K562 (cell line): ENCODE measurements at regions of chr6 and their contacts with region 1.

Region 1: GRCh38 chr6:20401205-20402091 is at the start of gene E2F3:
- DNase-seq: peak; percentile 98 to 100 (median 98)
- ATAC-seq: peak; percentile 84
- H3K4me3 ChIP-seq: peak within 1 kb of the TSS; percentile 60
- H3K27ac ChIP-seq: peak within 1 kb of the TSS; percentile 95
- H3K4me1 ChIP-seq: peaks cover 12 to 19% of the 10 kb centered on the region in 2 experiments
- H3K27me3 ChIP-seq: no peaks in the 10 kb centered on the region
- CTCF ChIP-seq: no peak
- EP300 ChIP-seq: no peak
- POLR2A ChIP-seq: peak; percentile 99
- RAD21 ChIP-seq: peak; percentile 19 to 20; a peak in 2 of 4 replicates
- polyA plus RNA-seq, gene E2F3: 11.8 to 14.8 TPM

Region 2: GRCh38 chr6:20212392-20213217 is 188.8 kb before region 1 on chr6 and contains the start of gene MBOAT1:
- CTCF ChIA-PET with region 1: no interaction called
- POLR2A ChIA-PET with region 1: interaction called, 4 read pairs
- in situ Hi-C with region 1: no loop called
- intact Hi-C with region 1: loop called (anchors 2 kb)
- DNase-seq: peak; percentile 89 to 93 (median 91)
- ATAC-seq: peak; percentile 94
- H3K4me3 ChIP-seq: peak within 1 kb of the TSS; percentile 59
- H3K27ac ChIP-seq: peak within 1 kb of the TSS; percentile 86
- H3K4me1 ChIP-seq: peaks cover 35 to 43% of the 10 kb centered on the region in 2 experiments
- H3K27me3 ChIP-seq: no peaks in the 10 kb centered on the region
- CTCF ChIP-seq: peak in 2 of 3 experiments; percentile 26 to 42; a peak in 4 of 6 replicates
- EP300 ChIP-seq: no peak
- POLR2A ChIP-seq: peak; percentile 71
- RAD21 ChIP-seq: peak; percentile 38 to 49; a peak in 3 of 4 replicates
- polyA plus RNA-seq, gene MBOAT1: 0.13 to 0.39 TPM

Region 3: GRCh38 chr6:20427856-20428255 is 26.4 kb after region 1 on chr6:
- CTCF ChIA-PET with region 1: no interaction called
- POLR2A ChIA-PET with region 1: interaction called, 11 read pairs
- in situ Hi-C with region 1: no loop called
- intact Hi-C with region 1: no loop called
- DNase-seq: no peak
- ATAC-seq: no peak
- H3K4me3 ChIP-seq: no peak overlapping the region
- H3K27ac ChIP-seq: peak overlapping the region; percentile 19; the same call in 1 of the 3 replicates
- H3K4me1 ChIP-seq: peaks cover 36 to 53% of the 10 kb centered on the region in 2 experiments
- H3K27me3 ChIP-seq: no peaks in the 10 kb centered on the region
- CTCF ChIP-seq: no peak
- EP300 ChIP-seq: no peak
- POLR2A ChIP-seq: no peak
- RAD21 ChIP-seq: no peak

Region 4: GRCh38 chr6:20455251-20455940 is 53.9 kb after region 1 on chr6:
- CTCF ChIA-PET with region 1: interaction called, 8 read pairs
- POLR2A ChIA-PET with region 1: interaction called, 19 read pairs
- in situ Hi-C with region 1: no loop called
- intact Hi-C with region 1: loop called (anchors 2 kb)
- DNase-seq: no peak
- ATAC-seq: no peak; the same call in 2 of the 3 replicates
- H3K4me3 ChIP-seq: no peak overlapping the region
- H3K27ac ChIP-seq: peak overlapping the region; percentile 67
- H3K4me1 ChIP-seq: peaks cover 34 to 68% of the 10 kb centered on the region in 2 experiments
- H3K27me3 ChIP-seq: no peaks in the 10 kb centered on the region
- CTCF ChIP-seq: no peak
- EP300 ChIP-seq: no peak; the same call in 1 of the 2 replicates
- POLR2A ChIP-seq: no peak
- RAD21 ChIP-seq: no peak

Region 5: GRCh38 chr6:20542927-20543602 is 141.6 kb after region 1 on chr6:
- CTCF ChIA-PET with region 1: no interaction called
- POLR2A ChIA-PET with region 1: no interaction called
- in situ Hi-C with region 1: no loop called
- intact Hi-C with region 1: no loop called
- DNase-seq: no peak
- ATAC-seq: no peak
- H3K4me3 ChIP-seq: no peak overlapping the region
- H3K27ac ChIP-seq: no peak overlapping the region
- H3K4me1 ChIP-seq: peaks cover 0 to 3% of the 10 kb centered on the region in 2 experiments; a peak in 1 of 5 replicates
- H3K27me3 ChIP-seq: no peaks in the 10 kb centered on the region
- CTCF ChIP-seq: no peak
- EP300 ChIP-seq: no peak
- POLR2A ChIP-seq: no peak
- RAD21 ChIP-seq: no peak